ENCODE measurements at regions of chr10 and their contacts with region 1.

Region 1: GRCh38 chr10:100481462-100482081 is 18.8 kb downstream of the WNT8B start:
- DNase-seq: peak; percentile 94

Region 2: GRCh38 chr10:100391163-100392002 is 90.2 kb before region 1 on chr10:
- CTCF ChIA-PET with region 1: no interaction called
- POLR2A ChIA-PET with region 1: no interaction called
- DNase-seq: no peak

Region 3: GRCh38 chr10:100468978-100469377 is 12.6 kb before region 1 on chr10:
- CTCF ChIA-PET with region 1: interaction called, 11 read pairs
- POLR2A ChIA-PET with region 1: interaction called, 3 read pairs
- DNase-seq: no peak

Region 4: DNA sequence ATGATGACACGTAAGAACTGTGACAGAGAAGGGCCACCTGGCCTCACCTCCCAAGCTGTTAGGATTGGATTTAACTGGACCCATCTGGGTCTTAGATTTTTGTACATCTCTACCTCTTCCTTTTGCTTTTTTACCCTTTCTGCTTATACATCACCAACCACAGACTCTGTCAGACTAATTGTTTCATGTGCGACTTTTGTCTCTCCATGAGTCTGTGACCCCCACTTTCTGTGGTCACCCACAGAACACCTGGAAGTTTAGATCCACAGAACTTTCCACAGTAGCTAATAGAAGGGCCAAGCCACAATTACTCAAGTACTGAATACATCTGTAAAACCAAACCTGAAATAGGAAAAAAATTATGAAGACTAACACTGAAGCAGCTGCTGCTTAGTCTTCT is 15.0 kb after region 1 on chr10:
- CTCF ChIA-PET with region 1: interaction called, 18 read pairs
- POLR2A ChIA-PET with region 1: interaction called, 3 read pairs
- DNase-seq: no peak

Region 5: GRCh38 chr10:100600218-100600617 is 118.6 kb after region 1 on chr10:
- CTCF ChIA-PET with region 1: no interaction called
- POLR2A ChIA-PET with region 1: no interaction called
- DNase-seq: peak; percentile 5

Measured in HEK293T (cell line).